Calu3 (cell line): ENCODE measurements at regions of chr14 and their contacts with region 1.

Region 1: DNA sequence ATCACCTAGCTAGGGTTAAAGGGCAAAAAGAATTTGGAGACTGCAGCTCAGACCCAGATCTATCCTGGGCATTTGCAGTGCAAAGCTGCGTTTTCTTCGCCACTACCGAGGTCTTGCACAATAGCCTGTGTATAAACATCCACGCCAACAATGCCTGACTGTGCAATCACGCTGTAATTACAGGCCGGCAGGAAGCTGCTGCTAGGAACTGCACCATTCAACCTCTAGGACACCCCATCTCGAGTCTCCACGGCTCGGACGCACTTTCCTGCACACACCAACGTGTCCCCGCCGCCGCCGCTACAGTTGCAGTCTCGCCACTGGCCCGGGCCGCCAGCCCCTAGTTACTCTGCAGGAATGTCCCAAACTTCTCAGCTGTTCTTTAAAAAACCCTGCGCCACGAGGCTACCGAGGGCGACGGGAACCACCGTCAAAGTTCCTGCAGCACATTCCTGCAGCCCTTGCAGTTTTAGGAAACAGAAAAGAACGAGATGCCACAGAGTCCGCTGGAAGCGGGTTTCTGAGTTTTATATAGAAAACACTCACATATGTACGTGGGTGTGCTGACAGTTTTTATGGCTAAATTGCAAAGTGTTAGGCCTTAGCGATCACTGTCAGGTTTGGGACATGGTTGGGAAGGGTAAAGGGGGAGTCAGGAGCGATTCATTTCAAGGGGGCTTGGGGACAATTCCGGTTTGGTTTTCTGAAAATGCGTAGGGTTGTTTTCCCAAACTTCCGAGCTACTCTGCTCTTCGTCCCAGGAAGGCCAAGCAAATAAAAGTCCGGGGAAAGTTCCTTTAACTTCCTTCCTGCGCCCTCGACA is 65.5 kb upstream of the PTGR2 start:
- DNase-seq: peak; percentile 66
- H3K4me3 Mint-ChIP-seq: peak overlapping the region; percentile 76
- H3K27ac Mint-ChIP-seq: peak overlapping the region; percentile 53
- H3K4me1 Mint-ChIP-seq: peaks cover 27% of the 10 kb centered on the region
- H3K27me3 Mint-ChIP-seq: no peaks in the 10 kb centered on the region
- CTCF ChIP-seq: no peak

Region 2: DNA sequence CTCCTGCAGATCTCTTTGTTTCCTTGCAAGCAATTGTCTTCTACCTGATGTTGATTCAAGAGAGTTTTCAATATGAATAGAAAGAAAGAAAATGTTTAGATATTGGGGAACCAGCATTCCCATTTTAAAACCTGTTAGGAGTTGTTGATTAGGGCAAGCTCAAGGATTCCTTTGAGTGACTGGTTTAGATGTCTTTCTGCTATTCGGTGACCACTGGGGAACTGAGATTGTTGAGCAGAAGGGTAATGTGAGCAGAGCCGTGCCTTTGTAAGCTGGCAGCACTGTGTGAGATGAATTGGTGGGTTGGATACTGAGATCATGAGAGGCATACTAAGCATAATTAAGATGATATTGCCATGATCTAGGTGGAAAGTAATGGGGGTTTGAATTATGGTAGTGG is 587.8 kb before region 1 on chr14:
- CTCF ChIA-PET with region 1: no interaction called
- intact Hi-C with region 1: no loop called
- DNase-seq: no peak
- H3K4me3 Mint-ChIP-seq: no peak overlapping the region
- H3K27ac Mint-ChIP-seq: no peak overlapping the region
- H3K4me1 Mint-ChIP-seq: no peaks in the 10 kb centered on the region
- H3K27me3 Mint-ChIP-seq: no peaks in the 10 kb centered on the region
- CTCF ChIP-seq: no peak

Region 3: GRCh38 chr14:73753959-73754882 is 31.9 kb before region 1 on chr14:
- CTCF ChIA-PET with region 1: interaction called, 9 read pairs
- intact Hi-C with region 1: loop called (anchors 2 kb)
- DNase-seq: no peak
- H3K4me3 Mint-ChIP-seq: peak overlapping the region; percentile 73
- H3K27ac Mint-ChIP-seq: peak overlapping the region; percentile 91
- H3K4me1 Mint-ChIP-seq: peaks cover 72% of the 10 kb centered on the region
- H3K27me3 Mint-ChIP-seq: no peaks in the 10 kb centered on the region
- CTCF ChIP-seq: no peak

Region 4: DNA sequence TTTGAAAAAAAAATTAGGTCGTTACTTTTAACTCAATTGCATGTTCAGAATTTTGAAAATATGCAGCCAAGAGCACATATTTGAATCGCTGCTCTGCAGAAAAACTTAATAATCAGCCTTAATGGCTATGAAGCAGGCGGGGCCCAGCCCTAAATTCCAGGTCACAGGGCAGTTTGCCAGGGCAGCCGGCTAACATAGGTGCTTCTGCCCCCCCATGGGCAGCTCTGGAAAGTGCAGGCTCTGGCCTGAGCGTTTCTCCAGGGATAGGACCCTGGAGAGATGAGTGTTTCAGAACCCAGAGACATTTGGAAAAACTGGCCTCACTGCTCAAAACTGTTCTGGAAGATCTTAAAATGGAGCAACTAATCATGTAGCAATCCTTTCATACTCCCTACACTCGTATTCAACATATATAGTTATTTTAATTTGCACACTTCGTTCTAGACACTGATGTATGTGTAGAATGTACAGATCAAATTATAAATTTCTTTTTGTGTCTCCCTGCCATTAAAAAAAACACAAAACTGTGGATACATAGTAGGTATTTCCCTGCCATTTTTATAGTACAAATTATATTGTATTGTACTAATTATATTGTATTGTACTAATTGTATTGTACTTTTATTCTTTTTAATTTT is 39.6 kb after region 1 on chr14:
- CTCF ChIA-PET with region 1: no interaction called
- intact Hi-C with region 1: loop called (anchors 5 kb)
- DNase-seq: peak; percentile 89
- H3K4me3 Mint-ChIP-seq: no peak overlapping the region
- H3K27ac Mint-ChIP-seq: no peak overlapping the region
- H3K4me1 Mint-ChIP-seq: peaks cover 11% of the 10 kb centered on the region
- H3K27me3 Mint-ChIP-seq: no peaks in the 10 kb centered on the region
- CTCF ChIP-seq: peak; percentile 77

Region 5: DNA sequence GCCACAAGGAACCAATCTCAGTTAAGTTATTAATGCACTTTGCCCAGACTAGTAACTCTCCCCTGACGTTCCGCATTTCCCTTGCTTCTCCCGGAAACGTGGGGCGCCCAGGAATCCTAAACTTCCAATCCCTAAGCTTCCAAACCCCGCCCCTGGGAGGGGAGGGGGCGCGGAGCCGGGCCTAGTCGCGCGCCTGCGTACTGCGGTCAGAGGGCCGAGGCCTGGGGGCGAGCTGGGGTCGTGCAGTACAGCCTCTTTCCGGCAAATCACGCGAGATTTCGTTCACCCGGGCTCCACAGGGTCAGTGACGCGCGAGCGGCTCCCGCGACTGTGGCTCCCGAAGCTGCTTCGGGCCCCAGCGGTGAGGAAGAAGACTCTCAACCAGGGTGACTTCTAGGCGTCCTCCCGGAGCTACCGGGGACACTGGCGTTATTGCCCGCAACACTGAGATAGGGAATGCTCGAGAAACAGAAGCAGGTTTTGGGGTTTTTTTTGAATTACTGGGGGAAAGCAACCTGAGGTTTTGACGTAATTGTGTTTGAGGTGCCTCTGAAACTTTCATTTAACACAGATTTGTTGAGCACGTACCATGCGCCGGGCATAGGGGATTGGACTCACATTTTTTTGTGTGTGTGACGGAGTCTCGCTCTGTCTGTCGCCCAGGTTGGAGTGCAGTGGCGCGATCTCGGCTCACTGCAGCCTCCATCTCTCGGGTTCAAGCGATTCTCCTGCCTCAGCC is 65.7 kb after region 1 on chr14 and contains the start of gene PTGR2:
- CTCF ChIA-PET with region 1: no interaction called
- intact Hi-C with region 1: no loop called
- DNase-seq: peak; percentile 95
- H3K4me3 Mint-ChIP-seq: peak within 1 kb of the TSS; percentile 78
- H3K27ac Mint-ChIP-seq: peak within 1 kb of the TSS; percentile 77
- H3K4me1 Mint-ChIP-seq: peaks cover 17% of the 10 kb centered on the region
- H3K27me3 Mint-ChIP-seq: no peaks in the 10 kb centered on the region
- CTCF ChIP-seq: no peak
- total RNA-seq, gene PTGR2: 9.4 and 12.0 TPM in 2 replicates

Region 6: DNA sequence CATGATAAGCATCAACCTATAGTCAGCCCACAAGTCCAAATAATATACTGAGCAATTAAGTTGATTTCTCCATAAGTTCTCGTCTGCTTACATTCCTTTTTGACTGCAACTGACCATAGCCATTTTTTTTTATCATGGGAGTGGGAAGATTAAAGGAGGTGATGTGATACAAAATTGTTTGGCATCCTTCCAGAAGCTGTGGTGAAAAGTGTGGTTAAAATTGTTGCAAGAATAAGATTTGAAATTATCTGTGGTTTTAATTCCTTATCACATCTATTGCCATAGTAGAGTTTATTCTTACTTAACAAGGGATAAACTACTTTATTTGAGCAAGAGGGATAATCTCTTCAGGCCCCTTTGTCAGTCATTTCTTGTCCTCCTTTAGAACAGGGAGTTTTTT is 349.3 kb after region 1 on chr14:
- CTCF ChIA-PET with region 1: no interaction called
- intact Hi-C with region 1: no loop called
- DNase-seq: no peak
- H3K4me3 Mint-ChIP-seq: no peak overlapping the region
- H3K27ac Mint-ChIP-seq: no peak overlapping the region
- H3K4me1 Mint-ChIP-seq: peaks cover 26% of the 10 kb centered on the region
- H3K27me3 Mint-ChIP-seq: no peaks in the 10 kb centered on the region
- CTCF ChIP-seq: no peak